IMR-90 (cell line): ENCODE measurements at regions of chr7 and their contacts with region 1.

Region 1: DNA sequence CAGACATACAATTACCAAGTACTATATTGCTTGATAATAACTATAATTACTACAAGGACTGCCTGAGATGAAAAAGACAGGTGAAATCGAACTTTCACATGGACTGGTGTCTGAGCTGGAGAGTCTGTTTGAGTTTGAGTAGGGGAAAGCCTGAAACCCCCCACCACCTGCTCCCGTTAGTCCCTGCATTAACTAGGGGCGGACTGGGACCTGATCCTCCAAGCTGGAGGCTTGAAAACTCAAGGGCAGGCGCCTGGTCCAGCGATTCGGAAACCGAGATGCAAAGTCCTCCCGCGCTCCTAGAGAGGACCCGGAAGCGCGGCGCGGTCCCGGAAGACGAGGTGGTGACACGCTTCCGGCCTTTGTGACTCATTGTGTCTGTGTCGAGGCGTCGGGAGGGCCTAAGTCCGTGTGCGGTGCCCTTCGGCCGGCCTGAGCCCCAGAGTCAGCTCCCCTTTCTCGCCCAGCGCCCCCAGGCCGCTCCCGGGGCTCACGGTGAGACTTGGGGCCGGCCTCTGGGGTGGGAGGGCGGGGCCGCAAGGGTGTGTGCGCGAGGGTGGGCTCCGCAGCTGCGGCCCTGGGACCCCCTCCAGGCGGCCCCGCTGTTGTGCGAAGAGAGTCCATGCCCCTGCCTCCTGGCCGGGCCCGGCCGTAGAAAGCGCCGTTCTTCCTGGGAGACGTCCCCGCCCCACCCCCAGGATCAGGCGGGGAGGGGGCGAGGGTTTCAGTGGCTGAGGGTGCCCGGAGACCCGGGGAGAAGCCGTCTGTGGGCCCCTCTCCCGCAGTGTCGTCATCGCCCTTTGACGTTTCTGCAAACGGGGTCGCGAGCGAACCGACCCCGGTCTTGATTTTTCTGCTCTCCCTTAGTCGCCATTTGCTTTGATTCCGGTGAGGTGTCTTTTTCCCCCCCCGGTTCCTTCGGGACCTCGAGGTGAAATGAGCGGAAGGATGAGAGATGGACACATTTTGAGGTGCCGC is at the start of gene ZKSCAN1:
- DNase-seq: peak; percentile 94
- ATAC-seq: peak; percentile 93
- H3K4me3 ChIP-seq: peak within 1 kb of the TSS; percentile 100
- H3K27ac ChIP-seq: peak within 1 kb of the TSS; percentile 85
- H3K4me1 ChIP-seq: peaks cover 2% of the 10 kb centered on the region; the same call in 1 of the 2 replicates
- H3K27me3 ChIP-seq: peaks cover 8% of the 10 kb centered on the region
- CTCF ChIP-seq: no peak
- POLR2A ChIP-seq: peak; percentile 91
- RAD21 ChIP-seq: no peak
- total RNA-seq, gene ZKSCAN1: 30.3 and 40.7 TPM in 2 replicates

Region 2: DNA sequence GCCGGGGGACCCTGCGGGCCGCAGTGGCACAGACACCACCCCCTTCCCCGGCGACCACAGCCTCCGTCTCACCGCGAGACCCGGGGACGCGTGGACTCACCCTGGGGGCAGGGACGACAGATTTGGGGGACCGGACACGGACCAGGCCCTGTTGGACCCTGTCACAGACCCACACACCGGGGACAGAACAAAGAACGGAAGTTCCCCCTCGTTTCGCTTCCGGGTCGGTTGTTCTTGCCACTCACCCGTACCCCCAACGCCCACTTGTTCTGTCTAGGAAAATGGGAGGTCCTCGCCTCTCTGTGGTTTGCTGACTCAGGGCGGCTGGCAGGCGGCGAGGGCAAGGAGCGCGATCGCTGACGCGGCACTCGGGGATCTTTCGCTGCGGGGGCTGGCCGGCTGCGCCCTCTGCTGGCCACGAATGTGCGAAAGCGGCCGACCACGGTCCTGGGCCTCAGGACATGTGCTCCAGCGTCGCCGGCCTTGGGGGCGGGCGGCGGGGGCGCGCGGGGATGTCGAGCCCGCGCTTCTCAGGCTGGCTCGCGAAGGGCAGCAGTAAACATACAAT is 66.1 kb after region 1 on chr7 and contains the start of gene ZNF3:
- CTCF ChIA-PET with region 1: no interaction called
- POLR2A ChIA-PET with region 1: interaction called, 19 read pairs
- dilution Hi-C with region 1: no loop called
- in situ Hi-C with region 1: no loop called
- intact Hi-C with region 1: loop called (anchors 2 kb)
- DNase-seq: peak; percentile 99
- ATAC-seq: peak; percentile 90
- H3K4me3 ChIP-seq: peak within 1 kb of the TSS; percentile 73
- H3K27ac ChIP-seq: peak within 1 kb of the TSS; percentile 87
- H3K4me1 ChIP-seq: peaks cover 9% of the 10 kb centered on the region
- H3K27me3 ChIP-seq: no peaks in the 10 kb centered on the region
- CTCF ChIP-seq: peak; percentile 95
- POLR2A ChIP-seq: peak; percentile 90
- RAD21 ChIP-seq: peak; percentile 73
- total RNA-seq, gene ZNF3: 30.8 and 33.1 TPM in 2 replicates

Region 3: GRCh38 chr7:100087055-100087750 is 71.7 kb after region 1 on chr7:
- CTCF ChIA-PET with region 1: no interaction called
- POLR2A ChIA-PET with region 1: no interaction called
- dilution Hi-C with region 1: no loop called
- in situ Hi-C with region 1: no loop called
- intact Hi-C with region 1: loop called (anchors 2 kb)
- DNase-seq: peak; percentile 99
- ATAC-seq: peak; percentile 62
- H3K4me3 ChIP-seq: no peak overlapping the region
- H3K27ac ChIP-seq: peak overlapping the region; percentile 100
- H3K4me1 ChIP-seq: peaks cover 21% of the 10 kb centered on the region
- H3K27me3 ChIP-seq: no peaks in the 10 kb centered on the region
- CTCF ChIP-seq: no peak
- POLR2A ChIP-seq: no peak
- RAD21 ChIP-seq: no peak